ENCODE measurements at regions of chr22 and their contacts with region 1.

Region 1: DNA sequence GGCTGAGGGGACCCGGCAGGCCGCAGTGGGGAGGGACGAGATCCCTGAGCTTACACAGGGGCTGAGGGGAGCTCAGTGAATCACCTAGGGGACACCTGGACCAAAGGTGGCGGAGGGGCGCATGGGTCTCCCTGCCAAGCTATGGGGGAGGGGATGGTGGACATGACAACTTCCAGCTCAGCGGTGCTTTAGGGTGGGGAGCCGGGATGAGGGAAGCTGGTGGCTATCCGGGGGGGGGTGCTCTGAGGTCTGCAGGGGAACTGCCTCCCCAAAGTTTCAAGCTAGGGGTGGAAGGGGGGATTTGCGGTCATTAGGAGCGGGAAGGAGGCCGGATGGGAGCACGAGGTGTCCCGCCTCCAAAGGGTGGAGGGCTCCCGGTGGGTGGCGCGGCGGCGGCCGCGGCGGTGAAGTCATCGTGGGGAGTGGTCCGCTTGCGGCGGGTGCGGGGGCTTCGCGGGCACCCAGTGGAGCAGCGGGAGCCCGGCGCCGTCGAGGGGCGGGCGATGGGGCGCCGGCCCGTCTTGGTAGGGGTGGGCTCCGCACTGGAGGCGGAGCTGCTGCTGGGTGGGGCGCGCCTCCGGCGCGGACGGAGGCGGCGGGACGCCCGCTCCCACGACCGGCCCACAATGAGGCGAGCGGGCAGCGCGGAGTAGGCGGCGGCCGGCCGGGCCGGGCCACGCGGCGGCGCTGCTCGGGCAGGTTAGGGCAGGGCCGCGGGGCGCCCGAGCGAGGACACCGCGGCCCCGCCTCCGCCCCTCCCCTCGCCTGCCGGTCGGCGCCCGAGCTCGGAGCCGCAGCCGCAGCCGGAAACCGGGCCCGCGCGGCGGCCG is at the start of gene MICALL1:
- DNase-seq: peak; percentile 35 to 61
- ATAC-seq: peak; percentile 80 to 81
- H3K4me3 ChIP-seq: peak within 1 kb of the TSS; percentile 59 to 85 (median 64)
- H3K27ac ChIP-seq: peak within 1 kb of the TSS; percentile 74 to 80 (median 76)
- H3K4me1 ChIP-seq: peaks cover 8 to 16% of the 10 kb centered on the region in 2 donors
- H3K27me3 ChIP-seq: no peaks in the 10 kb centered on the region
- CTCF ChIP-seq: peak in 4 of 5 experiments; percentile 41 to 69 (median 48)
- POLR2A ChIP-seq: peak; percentile 22 to 53
- total RNA-seq, gene MICALL1: 14.4 to 29.4 (median 21.1) TPM

Region 2: GRCh38 chr22:37633625-37634416 is 271.9 kb before region 1 on chr22:
- in situ Hi-C with region 1: no loop called
- intact Hi-C with region 1: no loop called
- DNase-seq: peak; percentile 52 to 78
- ATAC-seq: peak; percentile 56 to 62
- H3K4me3 ChIP-seq: peak overlapping the region; percentile 15 to 48 (median 32)
- H3K27ac ChIP-seq: peak overlapping the region; percentile 56 to 82 (median 74)
- H3K4me1 ChIP-seq: peaks cover 23 to 26% of the 10 kb centered on the region in 2 donors
- H3K27me3 ChIP-seq: peaks cover 0 to under 1% (median 0%) of the 10 kb centered on the region in 3 donors
- CTCF ChIP-seq: peak in 1 of 5 experiments; percentile 29
- POLR2A ChIP-seq: no peak

Region 3: GRCh38 chr22:37827056-37827455 is 78.7 kb before region 1 on chr22:
- in situ Hi-C with region 1: no loop called
- intact Hi-C with region 1: no loop called
- DNase-seq: peak in 1 of 2 donors; percentile 54
- ATAC-seq: peak; percentile 59 to 60
- H3K4me3 ChIP-seq: no peak overlapping the region
- H3K27ac ChIP-seq: peak overlapping the region; percentile 13 to 66 (median 31)
- H3K4me1 ChIP-seq: peaks cover 7% of the 10 kb centered on the region in 2 donors
- H3K27me3 ChIP-seq: no peaks in the 10 kb centered on the region
- CTCF ChIP-seq: no peak
- POLR2A ChIP-seq: no peak

Region 4: DNA sequence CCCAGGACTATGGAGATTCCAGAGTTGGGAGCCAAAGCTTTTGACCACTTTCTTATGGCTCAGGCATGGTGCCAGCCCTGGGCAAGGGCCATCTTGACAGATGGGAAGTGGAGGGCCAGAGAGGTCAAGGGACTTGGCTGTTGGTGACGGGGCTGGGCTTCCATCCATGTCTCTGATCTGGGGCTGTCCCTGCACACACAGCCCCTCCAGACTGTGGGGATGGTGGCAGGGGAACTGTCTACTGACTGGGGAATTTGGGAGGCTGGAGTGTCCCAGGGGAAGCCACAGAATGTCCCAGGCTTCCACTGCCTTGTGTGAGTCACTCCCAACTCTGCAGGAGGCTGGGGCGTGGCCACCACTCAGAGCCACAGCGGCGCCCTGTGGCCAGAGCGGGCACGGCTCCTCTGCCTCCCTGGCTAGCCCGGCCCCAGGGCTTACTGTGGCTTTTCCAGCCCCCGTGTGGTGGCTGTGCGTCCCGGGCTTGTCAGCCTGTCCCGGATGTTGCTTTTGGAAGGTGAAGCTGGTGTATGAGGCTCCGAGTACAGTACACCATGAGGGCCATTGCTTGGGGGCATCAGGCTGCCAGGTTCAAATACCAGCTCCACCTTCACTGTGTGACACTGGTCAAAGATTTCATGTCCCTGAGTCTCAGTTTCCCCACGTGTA is 28.1 kb after region 1 on chr22:
- in situ Hi-C with region 1: no loop called
- intact Hi-C with region 1: loop called (anchors 1 kb)
- DNase-seq: peak; percentile 79 to 88
- ATAC-seq: peak; percentile 96 to 99
- H3K4me3 ChIP-seq: no peak overlapping the region
- H3K27ac ChIP-seq: peak overlapping the region; percentile 63 to 83 (median 70)
- H3K4me1 ChIP-seq: peaks cover 11 to 12% of the 10 kb centered on the region in 2 donors
- H3K27me3 ChIP-seq: no peaks in the 10 kb centered on the region
- CTCF ChIP-seq: peak; percentile 90 to 99 (median 96)
- POLR2A ChIP-seq: no peak

Region 5: GRCh38 chr22:37965940-37966664 is 60.4 kb after region 1 on chr22:
- in situ Hi-C with region 1: no loop called
- intact Hi-C with region 1: loop called (anchors 2 kb)
- DNase-seq: no peak
- ATAC-seq: no peak
- H3K4me3 ChIP-seq: no peak overlapping the region
- H3K27ac ChIP-seq: no peak overlapping the region
- H3K4me1 ChIP-seq: peaks cover 4 to 5% of the 10 kb centered on the region in 2 donors
- H3K27me3 ChIP-seq: no peaks in the 10 kb centered on the region
- CTCF ChIP-seq: no peak
- POLR2A ChIP-seq: no peak